ENCODE measurements at regions of chr9 and their contacts with region 1.

Region 1: DNA sequence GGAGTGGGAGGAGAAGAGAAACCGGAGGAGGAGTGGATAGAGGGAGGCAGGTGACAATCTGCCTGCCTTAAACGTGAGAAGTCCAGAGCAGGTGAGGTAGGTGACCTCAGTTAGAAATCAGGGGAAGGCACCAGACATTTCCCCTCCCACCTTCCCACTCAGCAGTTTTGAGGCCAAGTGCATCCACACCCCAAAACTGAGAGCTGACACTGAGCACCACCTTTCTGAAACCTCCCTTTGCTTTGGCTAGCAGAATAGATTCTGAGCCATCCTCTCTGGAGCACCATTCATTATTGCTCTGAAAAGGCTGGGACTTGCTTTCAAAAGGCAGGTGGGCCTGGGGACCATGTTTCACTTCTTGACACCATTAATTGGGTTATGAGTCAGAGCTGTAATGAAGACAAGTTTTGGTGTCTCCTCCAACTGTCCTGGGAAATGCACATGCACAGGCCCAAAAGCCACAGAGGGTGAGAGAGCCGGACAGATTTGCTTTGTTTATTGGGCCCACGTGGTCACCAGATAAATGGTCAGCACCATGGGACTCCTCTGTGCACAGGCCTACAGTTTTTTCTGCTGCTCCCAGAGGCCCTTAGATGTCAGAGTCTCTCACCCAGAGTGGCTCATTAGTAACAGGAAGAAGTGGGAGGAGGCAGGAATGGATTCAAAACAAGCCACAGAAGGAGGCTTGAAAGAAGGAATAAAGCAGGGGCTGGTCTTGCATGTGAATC is 314.7 kb downstream of the TLE1 start:
- DNase-seq: no peak

Region 2: GRCh38 chr9:81045658-81046057 is 329.0 kb before region 1 on chr9:
- intact Hi-C with region 1: no loop called
- DNase-seq: no peak

Region 3: DNA sequence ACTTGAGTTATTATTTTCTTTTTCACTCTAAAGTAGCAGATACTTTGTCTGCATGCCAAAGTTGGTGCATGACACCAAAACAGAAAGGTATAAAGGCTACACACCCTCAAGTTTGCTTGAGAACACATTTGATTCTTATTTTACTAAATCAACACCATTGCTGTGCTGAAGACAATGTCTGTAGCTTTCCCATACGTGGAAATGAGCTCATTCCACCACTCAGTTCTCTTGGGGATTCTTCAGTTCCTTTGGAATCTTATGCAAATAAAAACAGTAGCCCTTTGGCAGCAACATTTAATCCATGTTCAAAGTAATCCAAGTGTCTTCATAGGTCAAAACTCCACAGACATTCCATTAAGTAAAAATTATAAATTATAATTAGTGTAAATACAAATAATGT is 49.8 kb after region 1 on chr9:
- intact Hi-C with region 1: loop called (anchors 10 kb)
- DNase-seq: no peak